HCT116 (cell line): ENCODE measurements at regions of chr16 and their contacts with region 1.

Region 1: GRCh38 chr16:69073161-69073669 is 32.2 kb upstream of the HAS3 start:
- DNase-seq: peak; percentile 93
- ATAC-seq: peak; percentile 71
- H3K4me3 ChIP-seq: peak overlapping the region in 1 of 2 experiments; percentile 22; a peak in 3 of 4 replicates
- H3K27ac ChIP-seq: peak overlapping the region; percentile 79
- H3K4me1 ChIP-seq: peaks cover 81 to 99% of the 10 kb centered on the region in 2 experiments
- H3K27me3 ChIP-seq: no peaks in the 10 kb centered on the region
- CTCF ChIP-seq: 0 out of 6 replicates have a peak, but pooled peaks of 1 of the 3 experiments have one; percentile 4
- POLR2A ChIP-seq: no peak
- RAD21 ChIP-seq: peak; percentile 50

Region 2: DNA sequence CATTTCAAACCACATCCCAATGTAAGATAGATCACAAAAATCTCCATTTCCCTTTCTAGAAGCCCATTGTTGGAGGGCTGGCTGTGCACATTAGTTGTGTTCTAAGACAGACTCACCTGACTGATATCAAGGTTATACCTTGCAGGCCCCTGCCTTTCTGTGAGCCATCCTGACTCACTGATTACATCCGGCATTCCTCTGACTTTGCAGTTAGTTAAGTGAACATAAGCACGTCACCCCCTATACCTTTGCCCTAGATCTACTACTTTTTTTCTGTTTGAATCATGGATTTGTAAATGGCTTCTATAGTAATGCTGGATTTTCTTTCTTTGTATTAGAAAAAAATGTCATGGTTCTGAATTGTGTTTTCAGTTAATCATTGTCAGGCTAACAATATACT is 151.6 kb before region 1 on chr16:
- CTCF ChIA-PET with region 1: no interaction called
- POLR2A ChIA-PET with region 1: interaction called, 6 read pairs
- RAD21 ChIA-PET with region 1: no interaction called
- intact Hi-C with region 1: loop called (anchors 2 kb)
- DNase-seq: peak; percentile 98
- ATAC-seq: peak; percentile 86
- H3K4me3 ChIP-seq: peak overlapping the region in 1 of 2 experiments; percentile 37; a peak in 1 of 4 replicates
- H3K27ac ChIP-seq: peak overlapping the region; percentile 89
- H3K4me1 ChIP-seq: peaks cover 42 to 61% of the 10 kb centered on the region in 2 experiments
- H3K27me3 ChIP-seq: no peaks in the 10 kb centered on the region
- CTCF ChIP-seq: no peak
- POLR2A ChIP-seq: no peak
- RAD21 ChIP-seq: peak; percentile 38

Region 3: GRCh38 chr16:68985855-68986254 is 87.4 kb before region 1 on chr16:
- CTCF ChIA-PET with region 1: no interaction called
- POLR2A ChIA-PET with region 1: interaction called, 11 read pairs
- RAD21 ChIA-PET with region 1: interaction called in 1 of 2 experiments, 7 read pairs
- intact Hi-C with region 1: no loop called
- DNase-seq: peak; percentile 51
- ATAC-seq: peak; percentile 72
- H3K4me3 ChIP-seq: no peak overlapping the region
- H3K27ac ChIP-seq: peak overlapping the region; percentile 49; the same call in 1 of the 2 replicates
- H3K4me1 ChIP-seq: peaks cover 30 to 57% of the 10 kb centered on the region in 2 experiments
- H3K27me3 ChIP-seq: no peaks in the 10 kb centered on the region
- CTCF ChIP-seq: no peak
- POLR2A ChIP-seq: no peak
- RAD21 ChIP-seq: no peak

Region 4: DNA sequence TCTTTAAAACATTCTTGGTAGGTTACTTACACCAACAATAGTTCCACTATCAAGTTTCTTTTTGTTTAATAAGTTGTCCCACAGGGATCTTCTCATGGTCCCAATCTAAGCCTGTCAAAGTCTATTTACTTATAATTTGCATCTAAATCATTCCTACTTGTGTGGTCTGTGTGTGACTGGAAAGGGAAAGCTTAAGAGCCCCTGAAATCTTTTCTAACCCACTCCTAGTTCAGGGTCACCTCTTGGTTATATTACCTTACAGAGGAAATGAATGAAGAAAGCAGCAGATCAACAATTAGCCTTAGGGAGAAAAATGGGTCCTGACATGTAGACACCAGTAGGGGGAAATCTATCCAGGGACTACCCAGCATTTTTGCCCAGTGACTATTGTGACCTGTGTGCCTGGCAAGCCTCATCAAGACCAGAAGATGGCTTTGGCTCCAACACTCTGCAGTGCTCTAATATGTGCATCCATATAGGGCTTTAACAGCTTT is 78.2 kb before region 1 on chr16:
- CTCF ChIA-PET with region 1: interaction called, 4 read pairs
- POLR2A ChIA-PET with region 1: interaction called, 11 read pairs
- RAD21 ChIA-PET with region 1: interaction called, 4 to 7 read pairs
- intact Hi-C with region 1: loop called (anchors 2 kb)
- DNase-seq: peak; percentile 80
- ATAC-seq: peak; percentile 87
- H3K4me3 ChIP-seq: no peak overlapping the region
- H3K27ac ChIP-seq: peak overlapping the region; percentile 68
- H3K4me1 ChIP-seq: peaks cover 43 to 86% of the 10 kb centered on the region in 2 experiments
- H3K27me3 ChIP-seq: no peaks in the 10 kb centered on the region
- CTCF ChIP-seq: peak; percentile 75 to 86 (median 78)
- POLR2A ChIP-seq: no peak
- RAD21 ChIP-seq: peak; percentile 91

Region 5: GRCh38 chr16:69049146-69049545 is 24.1 kb before region 1 on chr16:
- CTCF ChIA-PET with region 1: interaction called, 11 read pairs
- POLR2A ChIA-PET with region 1: interaction called, 13 read pairs
- RAD21 ChIA-PET with region 1: no interaction called
- intact Hi-C with region 1: no loop called
- DNase-seq: no peak
- ATAC-seq: peak; percentile 41; the same call in 1 of the 2 replicates
- H3K4me3 ChIP-seq: no peak overlapping the region
- H3K27ac ChIP-seq: no peak overlapping the region; the same call in 1 of the 2 replicates
- H3K4me1 ChIP-seq: peaks cover 42 to 65% of the 10 kb centered on the region in 2 experiments
- H3K27me3 ChIP-seq: no peaks in the 10 kb centered on the region
- CTCF ChIP-seq: no peak
- POLR2A ChIP-seq: no peak
- RAD21 ChIP-seq: no peak

Region 6: GRCh38 chr16:69057400-69058378 is 15.5 kb before region 1 on chr16:
- CTCF ChIA-PET with region 1: no interaction called
- POLR2A ChIA-PET with region 1: interaction called, 30 read pairs
- RAD21 ChIA-PET with region 1: no interaction called
- intact Hi-C with region 1: no loop called
- DNase-seq: peak; percentile 64
- ATAC-seq: peak; percentile 77
- H3K4me3 ChIP-seq: no peak overlapping the region
- H3K27ac ChIP-seq: peak overlapping the region; percentile 55
- H3K4me1 ChIP-seq: peaks cover 26 to 72% of the 10 kb centered on the region in 2 experiments
- H3K27me3 ChIP-seq: no peaks in the 10 kb centered on the region
- CTCF ChIP-seq: no peak
- POLR2A ChIP-seq: no peak
- RAD21 ChIP-seq: no peak

Region 7: DNA sequence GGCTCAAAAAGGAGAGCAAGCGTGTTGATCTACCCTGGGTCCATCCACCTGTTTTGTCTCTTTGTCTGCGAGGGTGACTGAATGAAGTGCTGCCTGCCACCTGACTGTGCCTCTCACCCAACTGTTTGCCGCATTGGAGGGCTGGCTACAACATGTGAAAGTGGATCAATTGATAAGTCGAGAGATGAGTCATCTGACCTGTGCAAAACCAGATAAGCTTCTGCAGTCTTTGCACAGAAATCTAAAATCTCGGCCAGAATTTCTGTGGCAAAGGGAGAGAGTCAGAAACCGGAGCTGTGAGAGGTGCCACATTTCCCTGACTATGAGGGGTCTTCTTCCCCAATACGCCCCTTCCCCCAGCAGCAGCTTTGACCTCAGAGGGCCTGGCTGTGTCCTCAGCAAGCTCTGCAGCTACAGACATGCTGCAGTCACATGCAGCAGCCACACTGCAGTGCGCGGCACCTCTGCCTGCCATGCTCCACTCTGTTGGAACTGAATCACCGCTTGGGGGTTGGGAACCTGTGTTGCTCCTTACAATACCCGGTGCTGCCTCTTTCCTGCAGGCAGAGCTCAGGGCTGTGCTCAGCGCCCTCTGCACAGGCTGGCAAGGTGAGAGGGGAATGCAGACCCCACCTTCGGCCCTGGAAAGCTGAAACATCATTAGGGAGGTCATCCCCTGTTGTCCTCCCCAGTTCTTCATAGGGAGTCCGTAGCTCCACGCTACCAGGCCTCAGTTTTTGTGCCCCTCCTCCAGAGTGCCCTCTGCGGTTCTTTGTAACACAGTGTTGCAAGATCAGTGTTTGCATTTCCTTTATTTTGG is 16.1 kb after region 1 on chr16:
- CTCF ChIA-PET with region 1: no interaction called
- POLR2A ChIA-PET with region 1: interaction called, 18 read pairs
- RAD21 ChIA-PET with region 1: no interaction called
- intact Hi-C with region 1: no loop called
- DNase-seq: no peak
- ATAC-seq: peak; percentile 70
- H3K4me3 ChIP-seq: no peak overlapping the region
- H3K27ac ChIP-seq: peak overlapping the region; percentile 9; the same call in 1 of the 2 replicates
- H3K4me1 ChIP-seq: peaks cover 21 to 35% of the 10 kb centered on the region in 2 experiments
- H3K27me3 ChIP-seq: no peaks in the 10 kb centered on the region
- CTCF ChIP-seq: no peak
- POLR2A ChIP-seq: no peak
- RAD21 ChIP-seq: no peak

Region 8: DNA sequence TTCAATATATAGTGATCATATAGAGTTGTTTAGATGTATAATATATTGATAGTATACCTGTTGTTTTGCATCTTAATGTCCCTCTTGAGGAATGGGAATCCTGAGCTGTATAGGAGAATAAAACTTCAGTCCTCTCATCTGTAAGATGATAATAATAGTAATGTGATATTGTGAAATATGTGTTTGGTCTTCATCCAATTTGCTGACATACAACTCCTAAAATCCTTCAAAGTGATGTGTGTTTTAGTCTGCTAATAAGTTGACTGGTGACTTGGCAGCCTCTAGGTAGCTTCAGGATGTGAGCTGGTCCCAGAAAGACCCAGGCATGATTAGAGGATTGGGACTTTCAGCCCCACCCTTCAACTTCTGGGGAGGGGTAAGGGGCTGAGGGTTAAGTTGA is 469.8 kb after region 1 on chr16:
- CTCF ChIA-PET with region 1: no interaction called
- POLR2A ChIA-PET with region 1: no interaction called
- RAD21 ChIA-PET with region 1: no interaction called
- intact Hi-C with region 1: no loop called
- DNase-seq: no peak
- ATAC-seq: no peak
- H3K4me3 ChIP-seq: no peak overlapping the region
- H3K27ac ChIP-seq: no peak overlapping the region
- H3K4me1 ChIP-seq: peaks cover 19 to 22% of the 10 kb centered on the region in 2 experiments
- H3K27me3 ChIP-seq: no peaks in the 10 kb centered on the region
- CTCF ChIP-seq: no peak
- POLR2A ChIP-seq: no peak
- RAD21 ChIP-seq: no peak